ENCODE measurements at regions of chr3 and their contacts with region 1.

Region 1: GRCh38 chr3:129824926-129825541 is 68.5 kb downstream of the TMCC1 start:
- ATAC-seq: peak in 6 of 8 experiments; percentile 26 to 63 (median 32)
- H3K4me3 ChIP-seq: no peak overlapping the region
- H3K27ac ChIP-seq: no peak overlapping the region
- H3K4me1 ChIP-seq: no peaks in the 10 kb centered on the region

Region 2: DNA sequence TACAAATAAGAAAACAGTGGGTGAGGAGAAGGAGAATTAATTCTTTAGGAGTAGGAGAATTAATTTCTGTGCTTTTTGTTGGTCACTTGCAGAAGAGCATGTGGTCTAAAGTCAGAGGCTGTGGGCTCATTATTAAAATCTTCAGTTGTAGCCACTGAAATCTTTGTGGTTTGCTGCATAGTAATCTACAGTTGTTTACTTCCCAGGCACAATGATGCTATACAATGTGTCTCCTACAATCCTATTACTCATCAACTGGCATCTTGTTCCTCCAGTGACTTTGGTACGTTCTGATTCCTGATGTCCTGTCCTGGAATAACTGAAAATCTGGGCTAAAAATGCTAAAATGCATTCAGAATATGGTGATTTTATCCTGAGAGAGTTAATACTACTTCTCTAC is 364.0 kb before region 1 on chr3:
- in situ Hi-C with region 1: loop called in 1 of 9 experiments (anchors 25 kb)
- ATAC-seq: no peak
- H3K4me3 ChIP-seq: no peak overlapping the region
- H3K27ac ChIP-seq: no peak overlapping the region
- H3K4me1 ChIP-seq: no peaks in the 10 kb centered on the region

Region 3: GRCh38 chr3:129490242-129491045 is 334.6 kb before region 1 on chr3:
- in situ Hi-C with region 1: loop called in 2 of 9 experiments (anchors 25 kb)
- ATAC-seq: peak; percentile 88 to 99 (median 98)
- H3K4me3 ChIP-seq: no peak overlapping the region
- H3K27ac ChIP-seq: peak overlapping the region in 1 of 2 donors; percentile 26
- H3K4me1 ChIP-seq: peaks cover 6 to 7% of the 10 kb centered on the region in 2 donors

Region 4: DNA sequence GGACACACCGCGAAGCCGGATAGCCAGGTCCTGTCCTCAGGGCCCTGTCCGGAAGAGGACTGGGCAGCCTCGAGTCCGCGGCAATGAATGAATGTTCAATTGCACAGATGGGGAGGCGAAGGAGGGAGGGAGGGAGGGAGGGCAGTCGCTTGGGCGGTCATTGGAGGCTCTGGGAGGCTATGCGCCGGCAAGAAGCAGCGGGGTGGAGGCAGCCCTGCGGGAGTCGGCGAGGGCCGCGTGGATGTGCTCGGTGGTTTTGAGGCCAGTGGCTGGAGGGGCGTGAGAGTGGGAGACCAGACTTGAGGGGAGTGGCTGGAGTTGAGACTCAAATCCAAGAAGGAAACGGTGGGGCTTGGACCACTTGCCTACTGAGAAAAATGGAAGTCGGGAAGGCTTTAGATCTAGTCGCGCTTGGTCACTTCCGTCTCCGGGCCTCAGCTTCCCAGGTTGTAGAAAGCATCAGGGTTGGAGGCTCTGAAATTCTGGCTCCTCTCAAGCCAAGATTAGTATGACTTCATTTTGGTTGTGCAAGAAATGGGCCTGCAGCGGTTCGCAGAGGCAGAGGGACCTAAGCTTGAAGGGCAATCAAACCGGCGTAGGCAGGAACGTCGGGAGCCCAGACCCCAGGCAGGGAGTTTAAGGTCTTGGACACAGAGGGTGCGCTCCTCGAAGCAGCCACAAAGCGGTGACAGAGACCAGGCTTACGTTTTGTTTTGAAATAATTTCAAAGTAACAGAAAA is 197.4 kb before region 1 on chr3:
- in situ Hi-C with region 1: loop called in 2 of 9 experiments (anchors 10 to 25 kb)
- ATAC-seq: peak; percentile 36 to 83 (median 70)
- H3K4me3 ChIP-seq: peak overlapping the region in 4 of 5 donors; percentile 17 to 36 (median 30)
- H3K27ac ChIP-seq: peak overlapping the region in 1 of 2 donors; percentile 30
- H3K4me1 ChIP-seq: peaks cover 13 to 22% of the 10 kb centered on the region in 2 donors

Region 5: DNA sequence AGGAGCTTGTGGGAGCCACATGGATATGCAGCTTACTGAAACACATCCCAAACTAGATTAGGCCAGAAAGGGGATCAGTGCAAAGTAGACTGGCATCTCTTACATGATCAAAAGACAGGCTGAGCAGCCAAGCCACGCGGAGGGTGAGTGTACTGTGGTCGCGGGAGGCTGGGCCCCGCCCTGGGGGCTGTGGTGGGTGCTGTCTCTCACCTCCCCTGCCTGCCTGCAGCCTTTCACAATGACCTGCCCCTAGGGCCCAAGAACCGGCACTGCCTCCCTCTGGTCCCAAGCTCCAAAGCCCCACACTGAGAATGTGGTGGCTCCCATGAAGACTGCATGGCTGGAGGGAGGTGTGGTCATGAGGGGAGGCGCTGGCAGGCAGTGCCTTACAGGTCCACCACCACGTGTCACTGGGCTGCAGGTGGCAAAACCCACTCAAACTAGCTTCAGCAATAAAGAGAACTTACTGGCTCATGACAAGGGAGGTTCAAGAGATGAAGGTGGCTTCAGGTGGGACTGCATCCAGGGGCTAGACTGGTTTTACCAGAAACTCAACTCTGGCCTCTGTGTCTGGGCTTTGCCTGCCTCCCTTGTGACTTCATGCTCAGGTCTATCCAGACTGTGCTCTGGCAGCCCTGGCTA is 191.2 kb before region 1 on chr3:
- in situ Hi-C with region 1: loop called in 2 of 9 experiments (anchors 10 to 25 kb)
- ATAC-seq: peak in 1 of 8 experiments; percentile 36
- H3K4me3 ChIP-seq: no peak overlapping the region
- H3K27ac ChIP-seq: no peak overlapping the region
- H3K4me1 ChIP-seq: no peaks in the 10 kb centered on the region

Region 6: DNA sequence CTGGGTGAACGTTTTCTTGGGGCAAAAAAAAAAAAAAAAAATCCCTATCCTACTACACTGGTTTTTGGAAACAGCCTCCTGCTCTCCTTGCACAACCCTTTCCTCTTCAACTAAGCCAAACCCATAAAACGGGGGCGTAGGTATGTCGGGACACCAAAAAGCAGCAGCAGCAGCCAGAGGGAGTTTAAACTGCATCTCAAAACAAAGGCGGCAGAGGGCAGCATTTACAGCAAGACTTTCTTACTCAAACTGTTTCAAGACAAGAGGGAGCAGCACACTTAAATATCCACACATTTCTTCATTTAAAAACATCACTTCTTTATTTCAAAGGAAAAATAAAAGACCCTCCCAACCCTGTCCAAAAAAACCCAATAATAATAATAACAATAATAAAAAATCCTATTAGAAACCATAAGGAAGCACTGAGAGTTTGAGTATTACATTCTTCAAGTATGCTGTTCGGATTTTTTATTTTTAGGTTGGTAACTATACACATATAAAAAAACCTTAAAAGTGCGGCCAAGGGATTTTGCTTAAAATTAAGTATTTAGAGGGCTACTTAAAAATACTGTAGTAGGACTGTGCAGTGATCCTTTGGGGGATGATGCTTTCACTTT is 174.7 kb before region 1 on chr3:
- in situ Hi-C with region 1: loop called in 2 of 9 experiments (anchors 25 kb)
- ATAC-seq: peak in 3 of 8 experiments; percentile 20 to 32 (median 24)
- H3K4me3 ChIP-seq: no peak overlapping the region
- H3K27ac ChIP-seq: no peak overlapping the region
- H3K4me1 ChIP-seq: peaks cover 6 to 10% of the 10 kb centered on the region in 2 donors

Measured in motor neuron (in vitro differentiated cells).